ENCODE measurements at regions of chr20 and their contacts with region 1.

Region 1: DNA sequence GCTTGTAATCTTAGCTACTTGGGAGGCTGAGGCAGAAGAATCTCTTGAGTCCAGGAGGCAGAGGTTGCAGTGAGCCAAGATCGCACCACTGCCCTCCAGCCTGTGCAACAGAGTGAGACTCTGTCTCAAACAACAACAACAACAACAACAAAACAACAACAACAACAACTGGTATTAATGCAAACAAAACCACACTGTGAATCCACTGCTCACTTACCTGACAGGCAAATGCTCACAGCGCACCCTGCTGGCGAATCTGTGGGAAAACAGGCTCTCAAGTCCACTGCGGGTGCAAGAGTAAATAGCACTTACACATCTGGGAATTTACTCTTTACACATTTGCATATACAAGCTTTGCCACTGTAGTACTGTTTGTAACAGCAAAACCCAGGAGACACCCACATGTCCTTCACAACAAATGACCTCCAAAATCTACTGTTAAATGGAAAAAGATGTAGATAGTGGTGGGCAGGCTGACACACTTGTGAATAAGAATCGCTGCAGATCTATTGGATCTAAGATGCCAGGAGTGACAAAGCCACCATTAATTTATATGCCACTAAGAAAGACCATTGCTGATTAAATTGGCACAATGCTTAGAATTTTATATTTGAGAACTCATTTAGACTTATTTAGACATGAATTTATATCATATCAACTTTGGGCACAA is 29.3 kb downstream of the NSFL1C start:
- DNase-seq: peak; percentile 89
- ATAC-seq: peak; percentile 56
- H3K4me3 Mint-ChIP-seq: no peak overlapping the region
- H3K27ac Mint-ChIP-seq: no peak overlapping the region
- H3K4me1 Mint-ChIP-seq: peaks cover 27% of the 10 kb centered on the region
- H3K27me3 Mint-ChIP-seq: no peaks in the 10 kb centered on the region

Region 2: DNA sequence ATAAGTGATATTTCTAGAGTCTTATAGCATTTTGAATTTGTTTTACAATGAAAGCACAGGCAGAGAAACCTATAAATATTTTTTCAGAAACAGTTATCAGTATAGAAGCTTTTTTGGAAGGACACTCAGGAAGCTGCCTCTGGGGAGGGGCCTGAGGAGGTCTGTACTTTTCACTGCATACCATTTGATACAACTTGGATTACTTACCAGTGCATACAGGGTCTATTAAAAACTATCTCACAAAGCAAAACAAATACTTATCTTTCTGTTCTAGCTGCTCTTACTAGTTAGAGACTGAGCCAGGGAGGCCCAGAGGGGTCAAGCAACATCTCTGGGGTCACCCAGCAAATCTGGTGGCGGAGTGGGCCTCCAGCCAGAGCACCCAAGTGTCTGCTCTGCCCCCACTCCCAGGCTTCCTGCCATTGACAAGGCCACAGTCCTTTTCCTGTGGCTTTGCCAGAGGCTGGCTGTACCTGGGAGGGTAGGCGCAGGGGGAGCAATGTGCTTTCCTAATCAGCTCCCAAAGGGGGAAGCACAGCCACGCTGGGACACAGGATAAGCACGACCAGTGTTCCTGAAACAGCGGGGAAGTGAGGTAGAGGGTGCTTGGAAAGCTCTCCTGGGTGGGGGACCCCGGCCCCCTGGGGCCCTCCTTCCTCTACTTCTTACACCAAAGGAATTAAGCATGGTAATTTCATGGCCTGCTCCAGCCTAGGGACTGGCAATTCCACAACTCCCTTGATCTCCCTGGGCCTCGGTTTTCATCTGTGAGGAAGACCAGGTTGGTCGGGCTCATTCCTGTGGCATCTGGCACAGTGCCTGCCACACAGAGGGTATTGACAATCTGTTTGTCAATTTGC is 835.0 kb before region 1 on chr20:
- CTCF ChIA-PET with region 1: no interaction called
- POLR2A ChIA-PET with region 1: no interaction called
- intact Hi-C with region 1: no loop called
- DNase-seq: no peak
- ATAC-seq: no peak
- H3K4me3 Mint-ChIP-seq: no peak overlapping the region
- H3K27ac Mint-ChIP-seq: no peak overlapping the region
- H3K4me1 Mint-ChIP-seq: no peaks in the 10 kb centered on the region
- H3K27me3 Mint-ChIP-seq: peaks cover 5% of the 10 kb centered on the region

Region 3: GRCh38 chr20:1313236-1313964 is 124.0 kb before region 1 on chr20:
- CTCF ChIA-PET with region 1: interaction called, 17 read pairs
- POLR2A ChIA-PET with region 1: interaction called, 3 read pairs
- intact Hi-C with region 1: loop called (anchors 1 kb)
- DNase-seq: peak; percentile 82
- ATAC-seq: peak; percentile 89
- H3K4me3 Mint-ChIP-seq: no peak overlapping the region
- H3K27ac Mint-ChIP-seq: no peak overlapping the region
- H3K4me1 Mint-ChIP-seq: peaks cover 3% of the 10 kb centered on the region
- H3K27me3 Mint-ChIP-seq: no peaks in the 10 kb centered on the region

Region 4: DNA sequence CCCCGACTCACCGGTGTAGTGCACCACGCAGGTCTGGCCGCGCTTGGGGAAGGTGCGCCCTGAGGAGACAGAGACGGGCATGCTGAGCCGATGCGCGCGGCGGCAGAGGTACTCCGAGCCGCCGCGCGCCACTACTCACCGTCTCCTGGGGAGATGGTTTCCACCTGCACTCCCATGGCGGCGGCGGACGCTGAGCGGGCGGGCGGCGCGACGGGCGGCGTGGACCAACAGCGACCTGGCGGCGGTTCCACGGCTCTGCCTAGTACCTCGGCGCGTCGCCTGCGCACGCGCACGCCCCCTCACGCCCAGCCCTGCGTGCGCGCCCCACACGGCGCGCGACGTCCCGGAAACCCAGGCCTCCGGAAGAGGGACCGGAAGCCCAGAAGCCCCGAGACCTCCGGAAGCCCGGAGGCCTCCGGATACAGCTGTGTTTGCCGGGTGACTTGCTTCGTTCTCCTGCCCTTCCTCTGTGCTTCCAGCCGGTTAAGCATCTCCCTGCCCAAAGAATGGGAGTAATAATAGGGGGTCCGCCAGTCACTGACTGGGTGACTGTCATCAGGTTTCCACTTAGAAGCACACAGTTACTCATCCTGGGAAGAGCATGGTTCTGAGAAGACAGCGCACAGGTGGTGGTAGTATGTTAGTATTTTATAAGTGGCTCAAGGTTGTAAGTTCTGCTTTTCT is 44.4 kb before region 1 on chr20 and contains the start of gene FKBP1A:
- CTCF ChIA-PET with region 1: interaction called, 8 read pairs
- POLR2A ChIA-PET with region 1: no interaction called
- intact Hi-C with region 1: loop called (anchors 1 to 5 kb)
- DNase-seq: peak; percentile 95
- ATAC-seq: peak; percentile 82
- H3K4me3 Mint-ChIP-seq: peak within 1 kb of the TSS; percentile 93
- H3K27ac Mint-ChIP-seq: peak within 1 kb of the TSS; percentile 94
- H3K4me1 Mint-ChIP-seq: peaks cover 56% of the 10 kb centered on the region
- H3K27me3 Mint-ChIP-seq: no peaks in the 10 kb centered on the region
- total RNA-seq, gene FKBP1A: 265 to 316 TPM

Region 5: GRCh38 chr20:1448081-1448620 is 10.8 kb after region 1 on chr20:
- CTCF ChIA-PET with region 1: interaction called, 22 read pairs
- POLR2A ChIA-PET with region 1: no interaction called
- intact Hi-C with region 1: no loop called
- DNase-seq: no peak
- ATAC-seq: no peak
- H3K4me3 Mint-ChIP-seq: no peak overlapping the region
- H3K27ac Mint-ChIP-seq: no peak overlapping the region
- H3K4me1 Mint-ChIP-seq: no peaks in the 10 kb centered on the region
- H3K27me3 Mint-ChIP-seq: no peaks in the 10 kb centered on the region

Region 6: DNA sequence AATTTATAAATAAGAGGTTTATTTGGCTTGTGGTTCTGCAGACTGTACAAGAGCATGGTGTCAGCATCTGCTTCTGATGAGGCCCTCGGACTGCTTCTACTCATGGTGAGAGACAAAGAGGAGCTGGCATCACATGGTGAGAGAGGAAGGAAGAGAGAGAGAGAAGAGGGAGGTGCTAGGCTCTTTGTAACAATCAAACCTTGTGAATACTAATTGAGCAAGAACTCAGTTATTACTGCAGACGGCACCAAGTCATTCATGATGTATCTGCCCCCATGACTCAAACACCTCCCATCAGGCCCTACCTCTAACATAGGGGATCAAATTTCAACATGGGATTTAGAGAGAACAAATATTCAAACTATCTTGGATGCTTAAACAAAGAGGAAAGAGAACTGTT is 226.5 kb after region 1 on chr20:
- CTCF ChIA-PET with region 1: no interaction called
- POLR2A ChIA-PET with region 1: no interaction called
- intact Hi-C with region 1: no loop called
- DNase-seq: peak; percentile 46
- ATAC-seq: peak; percentile 55
- H3K4me3 Mint-ChIP-seq: peak overlapping the region; percentile 47
- H3K27ac Mint-ChIP-seq: peak overlapping the region; percentile 98
- H3K4me1 Mint-ChIP-seq: peaks cover 96% of the 10 kb centered on the region
- H3K27me3 Mint-ChIP-seq: no peaks in the 10 kb centered on the region

Measured in activated CD4-positive, alpha-beta T cell treated with anti-CD3 and anti-CD28 coated beads for 36 hours (primary cell).